SK-N-SH (cell line): ENCODE measurements at regions of chr15 and their contacts with region 1.

Region 1: DNA sequence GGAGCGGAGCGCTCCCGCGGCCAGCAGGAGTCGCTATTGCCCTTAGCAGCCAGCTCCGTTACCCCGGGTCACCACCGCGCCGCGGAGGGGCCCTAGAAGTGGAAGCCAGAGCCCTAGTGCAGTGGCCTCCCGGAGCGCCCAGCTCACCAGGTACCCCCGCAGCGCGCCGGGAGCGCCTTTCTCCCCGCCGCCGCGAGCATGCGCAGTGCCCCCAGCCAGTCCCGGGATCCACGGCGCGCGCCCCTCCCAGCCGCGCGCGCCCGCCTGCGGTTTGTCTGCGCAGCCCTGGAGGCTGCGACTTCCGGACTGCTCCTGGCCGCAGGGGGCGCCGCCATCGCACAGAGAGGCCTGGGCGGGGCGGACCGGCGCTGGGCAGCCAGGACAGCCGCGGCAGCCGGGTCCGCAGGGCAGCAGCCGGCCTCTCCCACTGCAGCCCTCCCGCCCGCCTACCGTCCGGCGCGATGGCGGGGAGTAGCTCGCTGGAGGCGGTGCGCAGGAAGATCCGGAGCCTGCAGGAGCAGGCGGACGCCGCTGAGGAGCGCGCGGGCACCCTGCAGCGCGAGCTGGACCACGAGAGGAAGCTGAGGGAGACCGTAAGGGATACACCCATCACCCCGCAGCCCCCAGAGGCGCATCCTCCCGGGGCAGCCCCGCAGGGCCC is 5.7 kb downstream of the TPM1 start:
- DNase-seq: peak; percentile 97
- H3K4me3 ChIP-seq: peak overlapping the region; percentile 64 to 83
- H3K27ac ChIP-seq: peak overlapping the region; percentile 91 to 93
- H3K4me1 ChIP-seq: peaks cover 36 to 53% of the 10 kb centered on the region in 2 experiments
- H3K27me3 ChIP-seq: no peaks in the 10 kb centered on the region
- CTCF ChIP-seq: peak; percentile 93
- EP300 ChIP-seq: no peak; a peak in 1 of 4 replicates
- RAD21 ChIP-seq: peak; percentile 80

Region 2: DNA sequence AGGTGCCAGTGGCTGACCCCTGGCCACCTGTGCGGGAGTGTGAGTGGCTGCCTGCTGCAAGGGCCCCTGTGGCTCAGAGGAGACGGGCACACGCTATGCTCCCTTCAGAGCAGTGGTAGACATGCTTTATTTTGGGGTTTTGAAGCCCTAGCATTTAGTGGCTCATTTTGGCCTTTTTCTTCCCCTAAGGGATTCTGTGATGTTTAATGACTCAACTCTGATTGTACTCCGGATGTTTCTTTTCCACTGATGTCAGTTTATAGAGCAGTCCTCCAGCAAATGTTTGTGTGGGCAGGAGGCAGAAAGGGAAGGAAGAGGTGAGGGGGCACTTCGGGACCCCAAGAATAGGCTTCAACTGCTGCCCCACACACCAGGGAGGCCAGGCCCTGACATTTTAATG is 594.3 kb before region 1 on chr15:
- CTCF ChIA-PET with region 1: no interaction called
- POLR2A ChIA-PET with region 1: no interaction called
- DNase-seq: no peak
- H3K4me3 ChIP-seq: no peak overlapping the region
- H3K27ac ChIP-seq: peak overlapping the region in 1 of 2 experiments; percentile 48; a peak in 2 of 4 replicates
- H3K4me1 ChIP-seq: peaks cover 30 to 51% of the 10 kb centered on the region in 2 experiments; a peak in 3 of 4 replicates
- H3K27me3 ChIP-seq: no peaks in the 10 kb centered on the region
- CTCF ChIP-seq: no peak
- EP300 ChIP-seq: no peak
- RAD21 ChIP-seq: no peak

Region 3: GRCh38 chr15:62742409-62743171 is 305.7 kb before region 1 on chr15:
- CTCF ChIA-PET with region 1: interaction called, 18 read pairs
- POLR2A ChIA-PET with region 1: interaction called, 3 read pairs
- DNase-seq: peak; percentile 77
- H3K4me3 ChIP-seq: peak overlapping the region; percentile 5 to 55; a peak in 3 of 4 replicates
- H3K27ac ChIP-seq: peak overlapping the region; percentile 81 to 99
- H3K4me1 ChIP-seq: peaks cover 34 to 42% of the 10 kb centered on the region in 2 experiments
- H3K27me3 ChIP-seq: no peaks in the 10 kb centered on the region
- CTCF ChIP-seq: peak; percentile 93
- EP300 ChIP-seq: peak; percentile 56 to 57; a peak in 1 of 4 replicates
- RAD21 ChIP-seq: peak; percentile 73

Region 4: DNA sequence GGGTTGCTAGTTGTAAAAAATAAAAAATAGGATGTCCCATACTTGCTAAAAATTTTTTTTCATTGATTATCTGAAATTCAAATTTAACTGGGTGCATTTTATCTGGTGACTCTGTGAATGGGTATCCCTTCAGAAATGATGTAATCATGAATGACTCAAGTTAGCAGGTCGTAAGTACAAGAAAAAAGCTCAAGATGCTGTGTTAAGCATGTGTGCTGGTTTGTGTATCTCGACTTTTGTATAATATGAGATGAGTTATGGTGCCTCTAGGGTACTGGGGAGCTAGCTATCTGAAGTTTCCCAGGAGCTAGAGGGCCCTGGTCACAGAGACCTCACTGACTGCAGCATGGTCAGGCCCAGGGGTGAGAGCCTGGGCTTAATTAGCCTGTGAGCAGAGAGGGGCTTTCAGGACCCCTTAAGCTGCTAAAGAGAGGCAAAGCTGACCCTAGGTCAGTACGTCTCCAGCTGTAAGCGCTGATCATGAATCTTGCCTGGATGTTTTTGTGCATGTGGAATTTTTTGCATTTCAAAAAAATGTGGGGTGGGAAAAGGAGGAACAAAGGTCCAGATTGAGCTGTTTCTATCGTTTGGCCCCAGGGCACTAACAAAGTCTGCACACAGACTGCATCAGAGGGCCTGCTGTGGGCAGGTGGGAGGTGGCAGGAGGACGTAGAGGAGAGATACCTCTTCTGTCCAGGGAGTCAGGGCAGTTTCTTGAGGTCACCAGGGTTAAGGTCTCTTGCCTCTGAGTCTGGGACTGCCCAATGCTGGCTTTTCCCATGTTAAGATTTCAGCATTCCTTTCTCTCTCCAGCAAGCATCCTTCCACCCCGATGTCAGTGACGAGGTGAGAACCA is 238.9 kb before region 1 on chr15:
- CTCF ChIA-PET with region 1: interaction called, 24 read pairs
- POLR2A ChIA-PET with region 1: no interaction called
- DNase-seq: peak; percentile 66
- H3K4me3 ChIP-seq: no peak overlapping the region
- H3K27ac ChIP-seq: peak overlapping the region; percentile 65 to 71
- H3K4me1 ChIP-seq: peaks cover 11 to 34% of the 10 kb centered on the region in 2 experiments
- H3K27me3 ChIP-seq: no peaks in the 10 kb centered on the region
- CTCF ChIP-seq: no peak
- EP300 ChIP-seq: peak in 1 of 2 experiments; percentile 66; a peak in 2 of 4 replicates
- RAD21 ChIP-seq: no peak; the same call in 1 of the 2 replicates

Region 5: DNA sequence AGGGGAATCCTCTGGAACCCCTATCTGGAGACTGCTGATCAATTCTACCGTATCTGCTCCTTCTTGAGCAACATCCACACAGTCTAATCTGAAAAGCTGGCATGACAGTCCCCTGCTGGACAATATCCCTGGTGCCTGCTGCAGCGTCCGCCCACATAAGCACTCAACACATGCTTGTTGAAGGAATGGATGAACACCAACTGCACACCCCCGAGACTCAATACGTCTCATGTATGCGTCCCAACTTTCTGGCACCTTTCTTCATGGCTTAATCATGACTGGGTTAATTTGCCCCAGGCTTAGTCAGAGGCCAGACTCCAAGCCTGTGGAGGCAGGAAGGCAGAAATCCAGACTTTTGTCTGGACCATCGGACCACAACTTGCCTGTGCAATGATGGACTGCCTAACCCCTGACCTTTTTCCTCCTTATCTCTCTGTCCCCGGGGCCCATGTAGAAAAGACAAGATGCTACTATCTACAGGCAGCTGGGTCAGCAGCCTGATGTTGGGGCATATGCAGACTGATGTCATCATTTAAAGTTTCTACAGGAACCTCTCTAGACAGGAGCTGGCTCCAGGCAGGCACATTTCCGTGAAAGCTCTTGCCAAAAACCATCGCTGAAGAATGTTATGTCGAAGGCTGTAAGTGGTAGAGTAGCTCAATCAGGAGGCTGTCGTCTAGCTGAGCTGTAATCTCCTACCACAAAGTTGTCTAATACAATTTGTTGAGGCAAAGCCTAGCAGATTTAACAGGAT is 119.8 kb before region 1 on chr15:
- CTCF ChIA-PET with region 1: interaction called, 10 read pairs
- POLR2A ChIA-PET with region 1: no interaction called
- DNase-seq: peak; percentile 60
- H3K4me3 ChIP-seq: no peak overlapping the region
- H3K27ac ChIP-seq: peak overlapping the region; percentile 95 to 96
- H3K4me1 ChIP-seq: peaks cover 23 to 25% of the 10 kb centered on the region in 2 experiments
- H3K27me3 ChIP-seq: no peaks in the 10 kb centered on the region
- CTCF ChIP-seq: peak; percentile 71
- EP300 ChIP-seq: peak; percentile 54 to 91
- RAD21 ChIP-seq: peak; percentile 55

Region 6: DNA sequence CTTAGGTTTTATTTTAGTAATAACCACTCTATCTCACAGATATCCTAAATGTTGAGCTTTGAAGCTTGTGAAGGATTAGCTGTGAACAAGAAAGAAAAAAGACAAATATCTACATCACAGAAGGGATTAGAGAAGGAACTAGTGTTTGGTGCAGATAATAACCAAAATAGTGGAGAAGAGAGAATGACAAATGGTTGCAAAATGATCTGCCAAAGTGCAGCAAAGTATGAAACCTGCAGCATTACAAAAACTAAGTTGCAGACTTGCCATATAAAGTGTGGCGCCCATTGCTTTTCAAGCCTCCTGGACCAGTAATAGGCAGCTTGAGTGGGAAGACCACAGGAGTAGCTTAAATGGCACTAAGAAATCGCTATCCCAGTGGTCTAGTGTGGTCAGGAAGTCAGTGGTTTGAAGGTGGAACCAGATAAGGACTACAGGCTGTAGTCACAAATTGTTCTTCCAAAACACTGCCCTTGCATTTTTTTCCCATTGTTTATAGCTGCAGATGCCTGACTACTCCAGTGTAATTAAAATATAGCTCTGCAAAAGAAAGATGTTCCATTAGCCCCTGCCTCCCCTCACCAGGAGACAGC is 15.0 kb after region 1 on chr15:
- CTCF ChIA-PET with region 1: interaction called, 24 read pairs
- POLR2A ChIA-PET with region 1: no interaction called
- DNase-seq: no peak
- H3K4me3 ChIP-seq: no peak overlapping the region
- H3K27ac ChIP-seq: peak overlapping the region; percentile 47 to 91
- H3K4me1 ChIP-seq: peaks cover 5 to 33% of the 10 kb centered on the region in 2 experiments; a peak in 3 of 4 replicates
- H3K27me3 ChIP-seq: no peaks in the 10 kb centered on the region
- CTCF ChIP-seq: no peak
- EP300 ChIP-seq: no peak
- RAD21 ChIP-seq: no peak

Region 7: DNA sequence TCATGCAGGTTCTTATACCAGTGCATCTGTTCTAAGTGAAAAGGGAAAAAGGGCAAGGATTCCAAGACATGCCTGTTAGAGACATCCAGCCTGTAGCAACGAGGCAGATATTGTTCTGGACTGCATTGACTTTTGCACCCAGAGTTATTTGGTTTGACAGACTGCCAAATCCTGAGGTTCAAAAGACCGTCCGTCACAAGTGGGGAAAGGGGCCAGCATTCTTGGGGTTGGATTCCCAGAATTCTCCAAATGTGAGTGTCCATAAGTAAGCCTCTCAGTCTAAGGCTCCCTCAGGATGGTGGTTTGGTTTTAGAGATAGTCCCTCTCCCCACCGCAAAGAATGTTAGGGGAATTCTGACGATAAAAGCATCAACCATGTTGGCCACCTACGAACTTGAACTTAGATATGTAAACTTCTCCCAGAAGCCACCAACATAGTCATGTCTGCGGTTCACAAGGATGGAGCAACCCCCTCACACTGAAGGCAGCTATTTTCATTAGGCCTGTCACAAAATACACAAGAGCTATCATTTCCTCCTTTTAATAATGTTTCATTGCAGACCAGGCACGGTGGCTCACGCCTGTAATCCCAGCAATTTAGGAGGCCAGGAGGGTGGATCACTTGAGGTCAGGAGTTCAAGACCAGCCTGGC is 59.8 kb after region 1 on chr15:
- CTCF ChIA-PET with region 1: interaction called, 13 read pairs
- POLR2A ChIA-PET with region 1: no interaction called
- DNase-seq: no peak
- H3K4me3 ChIP-seq: no peak overlapping the region
- H3K27ac ChIP-seq: peak overlapping the region; percentile 34 to 85; a peak in 3 of 4 replicates
- H3K4me1 ChIP-seq: peaks cover 3 to 15% of the 10 kb centered on the region in 2 experiments; a peak in 3 of 4 replicates
- H3K27me3 ChIP-seq: no peaks in the 10 kb centered on the region
- CTCF ChIP-seq: no peak
- EP300 ChIP-seq: peak; percentile 38 to 96; a peak in 3 of 4 replicates
- RAD21 ChIP-seq: no peak

Region 8: GRCh38 chr15:63396152-63396928 is 348.1 kb after region 1 on chr15:
- CTCF ChIA-PET with region 1: no interaction called
- POLR2A ChIA-PET with region 1: no interaction called
- DNase-seq: no peak
- H3K4me3 ChIP-seq: no peak overlapping the region
- H3K27ac ChIP-seq: no peak overlapping the region
- H3K4me1 ChIP-seq: no peaks in the 10 kb centered on the region
- H3K27me3 ChIP-seq: no peaks in the 10 kb centered on the region
- CTCF ChIP-seq: no peak
- EP300 ChIP-seq: no peak
- RAD21 ChIP-seq: no peak

Region 9: DNA sequence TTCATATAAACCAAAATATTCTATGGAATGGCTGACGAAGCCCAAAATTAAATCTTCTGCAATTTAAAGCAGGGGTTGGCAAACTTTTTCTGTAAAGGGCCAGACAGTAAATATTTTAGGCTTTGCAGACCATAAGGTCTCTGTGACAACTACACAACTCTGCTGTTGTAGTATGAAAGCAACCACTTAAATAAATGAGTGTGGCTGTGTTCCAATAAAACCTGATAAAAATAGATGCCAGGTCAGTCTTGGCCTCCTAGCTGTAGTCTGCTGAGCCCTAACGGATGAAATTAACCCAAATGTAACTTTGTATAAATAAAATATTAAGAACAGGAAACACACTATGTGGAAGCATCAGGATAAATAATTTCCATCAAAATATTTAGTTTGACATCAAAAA is 653.1 kb after region 1 on chr15:
- CTCF ChIA-PET with region 1: no interaction called
- POLR2A ChIA-PET with region 1: no interaction called
- DNase-seq: no peak
- H3K4me3 ChIP-seq: no peak overlapping the region
- H3K27ac ChIP-seq: no peak overlapping the region; a peak in 1 of 4 replicates
- H3K4me1 ChIP-seq: peaks cover 5% of the 10 kb centered on the region in 2 experiments; a peak in 2 of 4 replicates
- H3K27me3 ChIP-seq: no peaks in the 10 kb centered on the region
- CTCF ChIP-seq: no peak
- EP300 ChIP-seq: no peak
- RAD21 ChIP-seq: no peak